ENCODE measurements at regions of chr11 and their contacts with region 1.

Region 1: DNA sequence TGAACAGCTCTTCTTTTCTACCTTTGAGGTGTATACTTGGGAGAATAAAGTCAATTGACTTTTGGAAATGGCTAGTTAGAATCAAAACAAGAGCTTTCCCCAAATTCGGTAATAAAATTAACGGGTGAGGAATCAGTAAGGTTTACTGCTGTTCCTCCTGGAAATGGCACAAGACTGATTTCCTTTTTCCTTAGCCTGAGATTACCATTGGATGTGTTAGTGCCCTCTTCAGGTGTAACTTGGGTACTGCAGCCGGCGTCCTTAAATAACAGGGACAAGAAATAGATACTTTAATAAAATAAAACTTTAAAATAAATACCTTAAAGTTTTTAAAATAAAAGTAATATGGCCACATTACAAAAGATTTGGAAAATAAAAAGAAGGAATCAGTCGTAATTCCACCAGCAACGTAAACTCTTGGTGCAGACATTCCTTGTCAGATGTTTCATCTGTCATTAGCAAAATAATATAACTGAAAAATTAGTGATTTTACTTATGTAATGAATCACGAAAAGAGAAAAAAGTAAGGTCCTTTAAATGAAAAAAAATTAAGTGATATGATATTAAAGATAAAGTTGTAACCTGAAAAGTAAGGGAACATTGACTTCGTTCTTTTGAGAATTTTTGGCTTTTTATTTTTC is 29.7 kb downstream of the ZFTA start:
- DNase-seq: peak; percentile 77
- H3K4me3 ChIP-seq: no peak overlapping the region
- H3K27ac ChIP-seq: no peak overlapping the region
- H3K4me1 ChIP-seq: peaks cover 0 to 8% (median 0%) of the 10 kb centered on the region in 4 donors
- H3K27me3 ChIP-seq: no peaks in the 10 kb centered on the region
- CTCF ChIP-seq: peak; percentile 88 to 99 (median 97)
- EP300 ChIP-seq: no peak
- POLR2A ChIP-seq: no peak

Region 2: GRCh38 chr11:63462137-63462536 is 276.7 kb before region 1 on chr11:
- in situ Hi-C with region 1: loop called in 1 of 4 experiments (anchors 10 kb)
- intact Hi-C with region 1: no loop called
- DNase-seq: no peak
- H3K4me3 ChIP-seq: no peak overlapping the region
- H3K27ac ChIP-seq: no peak overlapping the region
- H3K4me1 ChIP-seq: no peaks in the 10 kb centered on the region
- H3K27me3 ChIP-seq: peaks cover 4% of the 10 kb centered on the region
- CTCF ChIP-seq: no peak
- EP300 ChIP-seq: no peak
- POLR2A ChIP-seq: no peak

Region 3: DNA sequence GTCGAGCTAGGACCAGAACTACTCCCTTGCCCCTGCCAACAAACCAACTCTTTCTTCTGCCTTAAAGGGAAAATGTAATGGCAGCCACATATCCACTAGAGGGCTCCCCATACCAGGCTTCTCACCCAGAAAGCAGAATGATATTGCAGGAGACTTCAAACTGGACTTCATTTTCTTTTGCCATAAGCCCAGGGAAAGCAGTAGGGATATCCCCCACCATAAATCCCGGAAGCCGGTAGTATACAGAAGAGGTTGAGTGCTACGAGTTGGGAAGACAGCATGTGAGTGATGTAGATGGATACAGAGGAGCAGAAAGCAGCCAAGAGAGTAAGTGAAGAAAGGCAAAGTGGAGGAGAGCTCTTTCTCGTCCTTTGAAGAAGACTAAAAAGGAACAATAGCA is 259.9 kb before region 1 on chr11:
- in situ Hi-C with region 1: loop called in 2 of 4 experiments (anchors 10 to 25 kb)
- intact Hi-C with region 1: no loop called
- DNase-seq: peak; percentile 39
- H3K4me3 ChIP-seq: no peak overlapping the region
- H3K27ac ChIP-seq: no peak overlapping the region
- H3K4me1 ChIP-seq: peaks cover 0 to 4% (median 0%) of the 10 kb centered on the region in 4 donors
- H3K27me3 ChIP-seq: no peaks in the 10 kb centered on the region
- CTCF ChIP-seq: peak; percentile 89 to 92 (median 89)
- EP300 ChIP-seq: no peak
- POLR2A ChIP-seq: no peak

Region 4: DNA sequence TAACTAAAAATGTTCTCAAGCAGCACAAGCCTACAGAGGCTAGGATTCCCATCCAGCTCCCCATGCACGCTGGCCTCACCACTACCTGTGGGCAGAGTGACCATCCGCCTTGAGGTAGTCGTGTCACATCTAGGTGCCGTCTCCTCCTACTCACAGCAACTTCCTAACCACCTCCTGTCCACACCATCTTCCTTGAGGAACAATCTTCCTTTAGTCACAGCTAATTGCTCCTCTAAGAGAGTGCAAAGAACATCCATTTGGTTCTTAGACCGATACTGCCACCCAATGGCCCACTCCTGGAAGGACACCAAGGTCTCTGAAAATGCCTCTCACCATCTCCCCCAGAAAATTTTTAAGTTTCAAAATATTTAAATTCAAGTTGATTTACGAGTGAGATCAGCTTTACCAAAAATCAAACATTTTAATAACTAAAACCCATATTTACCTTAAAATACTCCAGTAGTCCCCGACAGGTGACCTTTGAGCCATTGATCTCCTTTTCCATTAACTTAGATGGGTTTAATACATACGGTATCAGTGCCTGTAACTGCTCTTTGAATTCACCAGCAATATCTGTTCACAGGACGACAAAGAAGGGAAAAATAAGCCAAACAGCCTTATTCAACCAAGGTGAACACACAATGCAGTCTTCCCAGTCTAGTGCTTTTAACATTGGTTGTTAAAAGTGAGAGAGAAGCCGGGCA is 102.9 kb before region 1 on chr11:
- in situ Hi-C with region 1: loop called in 3 of 4 experiments (anchors 10 to 25 kb)
- intact Hi-C with region 1: no loop called
- DNase-seq: peak; percentile 64
- H3K4me3 ChIP-seq: no peak overlapping the region
- H3K27ac ChIP-seq: no peak overlapping the region
- H3K4me1 ChIP-seq: peaks cover 0 to 12% (median 2%) of the 10 kb centered on the region in 4 donors
- H3K27me3 ChIP-seq: no peaks in the 10 kb centered on the region
- CTCF ChIP-seq: peak; percentile 64 to 88 (median 81)
- EP300 ChIP-seq: no peak
- POLR2A ChIP-seq: no peak

Region 5: DNA sequence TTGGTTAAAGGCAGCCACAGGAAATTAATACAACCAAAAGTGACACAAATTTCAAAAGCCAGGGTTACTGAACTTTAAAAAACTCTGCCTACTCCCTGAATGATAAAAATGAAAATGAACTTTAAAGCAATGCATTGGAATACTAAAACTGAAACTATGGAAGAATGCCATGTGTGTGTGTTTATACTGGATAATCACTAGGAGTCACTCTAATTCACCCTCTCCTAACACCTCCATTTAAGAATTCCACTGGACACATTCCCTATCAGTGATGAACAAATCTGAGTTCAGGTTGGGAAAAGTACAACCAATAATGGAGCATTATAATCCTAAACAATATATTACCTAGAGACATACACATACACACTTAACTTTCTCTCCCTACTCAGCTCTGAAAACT is 97.1 kb before region 1 on chr11:
- in situ Hi-C with region 1: loop called in 3 of 4 experiments (anchors 10 to 25 kb)
- intact Hi-C with region 1: no loop called
- DNase-seq: no peak
- H3K4me3 ChIP-seq: no peak overlapping the region
- H3K27ac ChIP-seq: no peak overlapping the region
- H3K4me1 ChIP-seq: no peaks in the 10 kb centered on the region
- H3K27me3 ChIP-seq: no peaks in the 10 kb centered on the region
- CTCF ChIP-seq: no peak
- EP300 ChIP-seq: no peak
- POLR2A ChIP-seq: no peak

Region 6: GRCh38 chr11:63871962-63872799 is 133.3 kb after region 1 on chr11:
- in situ Hi-C with region 1: no loop called
- intact Hi-C with region 1: no loop called
- DNase-seq: peak; percentile 87
- H3K4me3 ChIP-seq: peak overlapping the region in 1 of 4 donors; percentile 1
- H3K27ac ChIP-seq: peak overlapping the region; percentile 74 to 85 (median 82)
- H3K4me1 ChIP-seq: peaks cover 44 to 77% (median 64%) of the 10 kb centered on the region in 4 donors
- H3K27me3 ChIP-seq: no peaks in the 10 kb centered on the region
- CTCF ChIP-seq: peak; percentile 34 to 71 (median 37)
- EP300 ChIP-seq: no peak
- POLR2A ChIP-seq: no peak